ENCODE measurements at regions of chr1 and their contacts with region 1.

Region 1: DNA sequence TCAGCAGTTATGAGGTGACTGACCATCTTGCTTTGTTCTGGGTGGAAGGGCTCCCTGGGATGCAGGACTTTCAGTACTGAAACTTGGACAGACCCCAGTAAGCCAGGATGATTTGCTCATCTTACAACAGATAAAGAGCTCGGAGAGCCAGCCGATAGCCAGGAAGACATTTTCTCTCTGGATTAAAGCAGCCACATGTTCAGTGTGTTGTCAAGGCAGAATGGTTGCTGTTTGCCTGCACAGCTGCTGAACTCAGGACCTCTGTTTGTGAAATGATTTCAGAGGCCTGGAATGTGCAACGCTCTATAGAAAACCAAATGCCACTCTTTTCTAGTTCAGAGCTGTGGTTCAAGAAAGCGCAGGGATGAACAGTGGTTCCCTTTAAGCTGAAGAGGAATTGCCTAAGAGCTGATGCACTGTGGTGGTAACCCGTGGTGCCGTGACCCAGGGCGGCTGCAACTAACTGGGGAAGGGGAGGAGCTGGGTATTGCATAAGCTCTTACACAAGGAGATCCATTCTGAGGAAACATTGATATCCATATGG is 40.7 kb downstream of the CASQ2 start:
- DNase-seq: peak; percentile 90
- ATAC-seq: peak; percentile 93

Region 2: GRCh38 chr1:115771847-115772457 is 44.2 kb after region 1 on chr1:
- intact Hi-C with region 1: loop called (anchors 5 kb)
- DNase-seq: no peak
- ATAC-seq: peak; percentile 85